ENCODE measurements at regions of chr10 and their contacts with region 1.

Region 1: GRCh38 chr10:6108603-6109443 is 20.0 kb downstream of the RBM17 start:
- DNase-seq: no peak
- ATAC-seq: peak; percentile 35

Region 2: DNA sequence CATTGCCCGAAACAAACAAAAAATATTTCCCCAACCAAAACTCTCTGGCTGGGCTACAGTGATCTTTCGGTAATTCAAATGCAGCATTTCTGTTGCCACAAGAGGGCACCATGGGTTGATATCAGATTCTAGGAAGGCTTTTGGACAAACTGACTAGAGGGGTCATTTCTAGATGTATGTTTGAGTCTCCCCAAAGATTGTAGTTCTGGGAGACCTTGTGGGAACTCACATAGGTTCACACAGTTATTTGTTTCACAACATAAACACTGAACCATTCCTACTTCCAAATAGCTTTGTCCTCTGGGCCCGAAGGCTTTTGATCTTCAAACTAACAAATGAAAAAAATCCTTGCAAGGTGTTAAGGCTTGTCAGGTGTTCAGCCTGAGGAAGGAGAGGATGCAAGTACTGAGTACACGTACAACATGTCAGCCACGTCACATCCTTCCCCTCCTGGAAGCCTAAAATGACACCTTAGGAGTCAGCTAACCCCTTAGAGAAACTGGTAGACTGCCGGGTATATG is 94.5 kb before region 1 on chr10:
- intact Hi-C with region 1: no loop called
- DNase-seq: no peak
- ATAC-seq: peak; percentile 56

Region 3: DNA sequence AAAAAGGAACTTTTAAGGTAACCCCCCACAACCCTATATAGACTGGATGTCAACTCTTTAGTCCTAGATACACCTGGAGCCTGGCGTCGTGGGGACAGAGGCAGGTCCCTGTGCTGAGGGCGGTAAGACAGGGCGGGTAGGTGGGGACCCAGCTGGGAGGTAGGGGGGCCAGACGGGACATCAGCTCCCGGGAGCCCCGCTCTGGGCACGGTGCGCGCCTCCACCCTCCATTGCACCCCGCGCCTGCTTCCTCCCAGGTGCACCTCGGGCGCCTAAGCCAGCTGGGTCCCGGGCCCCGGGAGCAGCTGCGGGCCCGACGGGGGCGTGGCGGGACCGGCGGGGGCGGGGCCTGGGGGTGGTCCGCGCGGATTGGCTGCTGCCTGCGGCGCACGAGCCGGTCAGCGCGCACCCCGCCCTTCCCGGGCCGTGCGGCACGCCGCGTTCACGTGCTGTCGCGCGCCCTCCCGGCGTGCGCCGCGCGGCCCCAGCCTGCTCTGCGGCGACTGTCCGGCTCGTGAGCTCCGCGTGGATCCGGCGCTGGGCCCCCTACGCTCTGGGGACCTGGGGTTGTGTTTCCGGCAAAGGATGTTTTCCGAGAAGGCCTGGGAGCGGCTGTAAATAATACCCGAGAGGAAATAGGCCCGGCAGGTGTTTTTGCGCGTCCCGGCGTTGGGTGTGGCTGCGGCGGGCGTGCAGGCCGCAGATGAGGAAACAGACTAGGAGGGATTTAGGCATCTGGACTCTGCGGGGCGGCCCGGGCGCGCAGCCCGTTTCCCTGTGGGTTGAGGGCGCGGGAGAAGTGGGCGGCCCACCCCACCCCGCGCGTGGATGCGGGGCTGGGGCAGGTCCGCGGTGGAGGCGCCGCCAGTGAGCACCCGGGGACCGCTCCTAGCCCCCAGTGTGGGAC is 54.8 kb after region 1 on chr10:
- intact Hi-C with region 1: no loop called
- DNase-seq: peak; percentile 95
- ATAC-seq: peak; percentile 99

Region 4: DNA sequence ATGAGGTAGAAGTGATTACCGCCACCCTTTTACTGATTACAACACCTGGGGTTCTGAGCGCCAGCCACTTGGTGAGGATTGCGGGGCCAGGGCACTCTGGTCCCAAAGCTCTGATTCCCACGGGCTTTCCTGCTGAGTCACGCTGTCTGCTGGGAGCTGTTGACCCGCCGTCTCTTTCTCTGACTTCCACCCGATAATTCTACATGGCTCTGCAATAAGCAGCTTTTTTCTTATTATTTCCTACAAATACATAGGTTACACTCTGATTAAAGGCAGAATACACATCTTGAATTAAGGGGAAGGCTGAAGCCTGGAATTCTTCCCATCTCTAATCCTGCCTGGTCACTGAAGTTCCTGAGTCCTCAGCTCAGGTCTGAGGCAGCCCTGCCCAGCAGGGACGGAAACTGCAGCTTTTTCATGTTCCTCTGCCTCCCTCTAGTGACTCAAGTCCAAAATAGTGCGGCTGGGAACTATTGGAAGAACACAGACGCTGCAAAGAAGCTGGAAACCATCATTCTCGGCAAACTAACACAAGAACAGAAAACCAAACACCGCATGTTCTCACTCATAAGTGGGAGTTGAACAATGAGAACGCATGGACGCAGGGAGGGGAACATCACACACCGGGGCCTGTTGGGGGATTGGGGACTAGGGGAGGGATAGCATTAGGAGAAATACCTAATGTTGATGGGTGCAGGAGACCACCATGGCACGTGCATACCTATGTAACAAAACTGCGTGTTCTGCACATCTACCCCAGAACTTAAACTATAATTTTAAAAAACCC is 292.9 kb after region 1 on chr10:
- intact Hi-C with region 1: loop called (anchors 2 kb)
- DNase-seq: peak; percentile 74
- ATAC-seq: peak; percentile 98

Measured in left ventricle myocardium superior (tissue), 1 donor.